Caco-2 (cell line): ENCODE measurements at regions of chr1 and their contacts with region 1.

Region 1: DNA sequence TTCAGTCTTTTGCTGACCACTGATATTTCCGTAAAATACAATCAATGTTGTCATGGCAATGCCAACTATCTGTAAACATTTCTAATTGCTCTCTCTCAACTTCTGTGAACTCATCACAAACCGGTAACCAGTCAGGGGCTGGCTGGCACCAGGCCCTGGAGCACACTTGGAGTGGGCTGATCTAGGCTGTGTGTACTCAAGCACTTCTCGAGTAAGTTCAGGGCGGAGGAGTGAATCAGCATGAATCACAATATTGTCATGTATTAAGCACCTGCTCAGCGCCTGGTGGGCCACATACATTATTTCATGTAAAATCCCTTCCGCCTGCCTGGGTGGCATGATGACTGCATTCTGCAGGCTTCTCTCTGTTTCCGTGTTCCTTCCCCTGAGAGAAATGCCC is 212.4 kb downstream of the FOXD2 start:
- DNase-seq: no peak
- H3K4me3 ChIP-seq: no peak overlapping the region
- H3K4me3 Mint-ChIP-seq: no peak overlapping the region
- H3K27ac Mint-ChIP-seq: no peak overlapping the region
- H3K4me1 ChIP-seq: peaks cover 11% of the 10 kb centered on the region; the same call in 1 of the 2 replicates
- H3K4me1 Mint-ChIP-seq: peaks cover 7% of the 10 kb centered on the region
- H3K27me3 ChIP-seq: no peaks in the 10 kb centered on the region
- H3K27me3 Mint-ChIP-seq: peaks cover 2% of the 10 kb centered on the region
- CTCF ChIP-seq: no peak

Region 2: GRCh38 chr1:47696740-47697441 is 46.7 kb after region 1 on chr1:
- CTCF ChIA-PET with region 1: no interaction called
- POLR2A ChIA-PET with region 1: no interaction called
- intact Hi-C with region 1: loop called (anchors 5 kb)
- DNase-seq: peak in 1 of 2 experiments; percentile 66
- H3K4me3 ChIP-seq: no peak overlapping the region
- H3K4me3 Mint-ChIP-seq: no peak overlapping the region
- H3K27ac Mint-ChIP-seq: no peak overlapping the region
- H3K4me1 ChIP-seq: peaks cover 17% of the 10 kb centered on the region
- H3K4me1 Mint-ChIP-seq: no peaks in the 10 kb centered on the region
- H3K27me3 ChIP-seq: no peaks in the 10 kb centered on the region
- H3K27me3 Mint-ChIP-seq: no peaks in the 10 kb centered on the region
- CTCF ChIP-seq: no peak

Region 3: DNA sequence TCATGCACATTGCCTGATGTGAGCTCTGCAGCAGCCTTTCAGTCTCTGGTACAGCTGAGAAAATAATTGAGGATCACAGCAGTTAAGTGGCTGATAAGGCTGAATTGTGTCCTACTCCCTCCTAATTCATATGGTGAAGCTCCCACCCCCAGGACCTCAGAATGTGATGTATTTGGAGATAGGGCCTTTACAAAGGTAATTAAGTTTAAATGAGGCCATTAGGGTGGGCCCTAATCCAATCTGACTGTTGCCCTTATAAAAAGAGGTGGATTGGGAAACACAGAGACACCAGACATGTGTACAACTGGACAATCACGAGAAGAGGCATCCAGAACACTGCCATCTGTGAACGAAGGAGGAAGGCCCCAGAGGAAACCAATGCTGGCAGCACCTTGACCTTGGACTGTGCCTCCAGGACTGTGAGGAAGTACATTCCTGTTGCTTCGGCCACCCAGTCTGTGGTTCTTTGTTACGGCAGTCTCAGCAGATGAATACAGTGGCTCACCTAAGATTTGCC is 198.9 kb after region 1 on chr1:
- CTCF ChIA-PET with region 1: no interaction called
- POLR2A ChIA-PET with region 1: no interaction called
- intact Hi-C with region 1: no loop called
- DNase-seq: no peak
- H3K4me3 ChIP-seq: no peak overlapping the region
- H3K4me3 Mint-ChIP-seq: no peak overlapping the region
- H3K27ac Mint-ChIP-seq: no peak overlapping the region
- H3K4me1 ChIP-seq: no peaks in the 10 kb centered on the region
- H3K4me1 Mint-ChIP-seq: no peaks in the 10 kb centered on the region
- H3K27me3 ChIP-seq: no peaks in the 10 kb centered on the region
- H3K27me3 Mint-ChIP-seq: no peaks in the 10 kb centered on the region
- CTCF ChIP-seq: no peak